ENCODE measurements at regions of chr14 and their contacts with region 1.

Region 1: GRCh38 chr14:94129111-94129757 is at the start of gene IFI27L2:
- DNase-seq: peak; percentile 59
- ATAC-seq: peak; percentile 93
- H3K4me3 ChIP-seq: peak within 1 kb of the TSS; percentile 69 to 82
- H3K27ac ChIP-seq: peak within 1 kb of the TSS; percentile 40
- H3K4me1 ChIP-seq: peaks cover 6 to 22% of the 10 kb centered on the region in 2 experiments; a peak in 3 of 4 replicates
- H3K27me3 ChIP-seq: no peaks in the 10 kb centered on the region
- CTCF ChIP-seq: peak in 2 of 3 experiments; percentile 16 to 23; a peak in 1 of 6 replicates
- POLR2A ChIP-seq: no peak
- RAD21 ChIP-seq: no peak
- total RNA-seq, gene IFI27L2: 42.9 TPM

Region 2: DNA sequence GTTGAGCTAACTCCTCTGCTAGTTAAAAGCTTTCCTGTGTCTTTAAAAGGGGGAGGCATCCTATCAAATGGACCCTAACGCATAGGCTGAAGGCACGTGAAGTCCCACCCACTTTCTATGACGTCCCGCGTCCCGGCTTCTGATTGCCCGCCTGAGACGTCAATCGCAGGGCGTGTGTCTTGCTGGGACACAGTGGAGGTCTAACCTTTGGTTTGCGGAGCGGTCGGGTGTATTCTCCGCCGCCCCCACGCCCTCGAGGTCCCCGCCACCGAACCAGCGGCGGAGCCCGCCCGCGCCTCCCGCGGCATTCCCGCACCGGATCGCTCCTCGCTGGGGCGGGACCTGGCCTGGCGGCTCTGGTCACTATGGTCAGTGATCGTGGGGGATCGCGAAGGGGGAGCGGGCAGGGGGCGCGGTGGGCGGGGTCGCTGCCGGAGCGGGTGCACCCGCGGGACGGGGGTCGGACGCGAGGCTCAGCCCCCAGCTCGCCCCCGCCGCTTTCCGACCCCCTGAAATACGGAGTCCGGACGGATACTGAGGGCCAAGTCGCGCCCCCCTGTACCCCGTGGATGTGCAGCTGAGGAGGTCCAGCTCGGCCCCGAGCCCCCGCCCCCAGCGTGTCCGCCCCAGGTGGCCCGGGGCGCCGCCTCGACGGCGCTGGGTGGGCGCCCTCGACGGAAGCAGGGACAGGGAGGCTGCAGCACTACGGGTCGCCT is 102.9 kb before region 1 on chr14 and contains the start of gene OTUB2:
- CTCF ChIA-PET with region 1: interaction called, 12 read pairs
- POLR2A ChIA-PET with region 1: no interaction called
- RAD21 ChIA-PET with region 1: no interaction called
- intact Hi-C with region 1: no loop called
- DNase-seq: peak; percentile 97
- ATAC-seq: peak; percentile 83
- H3K4me3 ChIP-seq: peak within 1 kb of the TSS; percentile 49 to 66
- H3K27ac ChIP-seq: peak within 1 kb of the TSS; percentile 6; the same call in 1 of the 2 replicates
- H3K4me1 ChIP-seq: peaks cover 29 to 53% of the 10 kb centered on the region in 2 experiments
- H3K27me3 ChIP-seq: no peaks in the 10 kb centered on the region
- CTCF ChIP-seq: no peak
- POLR2A ChIP-seq: no peak
- RAD21 ChIP-seq: no peak
- total RNA-seq, gene OTUB2: 6.6 TPM

Region 3: GRCh38 chr14:94051115-94051514 is 78.1 kb before region 1 on chr14:
- CTCF ChIA-PET with region 1: interaction called, 8 read pairs
- POLR2A ChIA-PET with region 1: no interaction called
- RAD21 ChIA-PET with region 1: interaction called in 1 of 2 experiments, 3 read pairs
- intact Hi-C with region 1: loop called (anchors 1 kb)
- DNase-seq: no peak
- ATAC-seq: no peak
- H3K4me3 ChIP-seq: no peak overlapping the region
- H3K27ac ChIP-seq: no peak overlapping the region
- H3K4me1 ChIP-seq: no peaks in the 10 kb centered on the region
- H3K27me3 ChIP-seq: no peaks in the 10 kb centered on the region
- CTCF ChIP-seq: peak; percentile 34 to 42 (median 37); a peak in 4 of 6 replicates
- POLR2A ChIP-seq: no peak
- RAD21 ChIP-seq: peak; percentile 39; the same call in 1 of the 2 replicates

Region 4: DNA sequence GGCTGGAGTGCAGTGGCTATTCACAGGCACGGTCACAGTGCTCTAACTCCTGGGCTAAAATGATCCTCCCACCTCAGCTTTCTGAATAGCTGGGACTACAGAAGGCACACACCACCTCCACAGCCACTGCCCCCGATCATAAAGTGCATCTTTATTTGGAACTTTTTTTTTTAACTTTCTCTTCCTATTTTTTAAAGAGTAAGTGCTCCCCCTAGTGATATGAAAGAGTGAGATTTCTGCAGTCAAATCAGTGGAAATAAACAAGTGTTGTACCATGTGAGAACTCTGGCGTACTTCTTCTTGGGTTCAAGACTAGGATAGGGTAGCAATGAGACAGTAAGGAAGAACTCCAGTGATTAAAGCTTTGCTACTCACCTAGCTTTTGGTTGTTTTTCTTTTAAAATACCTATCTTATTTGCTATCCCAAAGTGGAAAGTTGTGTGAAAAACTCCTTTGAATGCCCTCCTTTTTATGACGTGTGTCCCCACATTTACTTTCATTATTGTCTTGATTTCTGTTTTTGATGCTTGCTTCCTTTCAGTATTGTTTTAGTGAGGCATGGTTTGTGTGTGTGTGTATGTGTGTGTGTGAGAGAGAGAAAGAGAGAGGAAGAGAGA is 51.5 kb after region 1 on chr14:
- CTCF ChIA-PET with region 1: interaction called, 13 read pairs
- POLR2A ChIA-PET with region 1: no interaction called
- RAD21 ChIA-PET with region 1: no interaction called
- intact Hi-C with region 1: no loop called
- DNase-seq: peak; percentile 35
- ATAC-seq: peak; percentile 89
- H3K4me3 ChIP-seq: 0 out of 4 replicates have a peak overlapping the region, but pooled peaks of 1 of the 2 experiments have one; percentile 8
- H3K27ac ChIP-seq: no peak overlapping the region
- H3K4me1 ChIP-seq: peaks cover 0 to 12% of the 10 kb centered on the region in 2 experiments; a peak in 3 of 4 replicates
- H3K27me3 ChIP-seq: no peaks in the 10 kb centered on the region
- CTCF ChIP-seq: peak; percentile 48 to 71 (median 67)
- POLR2A ChIP-seq: no peak
- RAD21 ChIP-seq: peak; percentile 73

Region 5: DNA sequence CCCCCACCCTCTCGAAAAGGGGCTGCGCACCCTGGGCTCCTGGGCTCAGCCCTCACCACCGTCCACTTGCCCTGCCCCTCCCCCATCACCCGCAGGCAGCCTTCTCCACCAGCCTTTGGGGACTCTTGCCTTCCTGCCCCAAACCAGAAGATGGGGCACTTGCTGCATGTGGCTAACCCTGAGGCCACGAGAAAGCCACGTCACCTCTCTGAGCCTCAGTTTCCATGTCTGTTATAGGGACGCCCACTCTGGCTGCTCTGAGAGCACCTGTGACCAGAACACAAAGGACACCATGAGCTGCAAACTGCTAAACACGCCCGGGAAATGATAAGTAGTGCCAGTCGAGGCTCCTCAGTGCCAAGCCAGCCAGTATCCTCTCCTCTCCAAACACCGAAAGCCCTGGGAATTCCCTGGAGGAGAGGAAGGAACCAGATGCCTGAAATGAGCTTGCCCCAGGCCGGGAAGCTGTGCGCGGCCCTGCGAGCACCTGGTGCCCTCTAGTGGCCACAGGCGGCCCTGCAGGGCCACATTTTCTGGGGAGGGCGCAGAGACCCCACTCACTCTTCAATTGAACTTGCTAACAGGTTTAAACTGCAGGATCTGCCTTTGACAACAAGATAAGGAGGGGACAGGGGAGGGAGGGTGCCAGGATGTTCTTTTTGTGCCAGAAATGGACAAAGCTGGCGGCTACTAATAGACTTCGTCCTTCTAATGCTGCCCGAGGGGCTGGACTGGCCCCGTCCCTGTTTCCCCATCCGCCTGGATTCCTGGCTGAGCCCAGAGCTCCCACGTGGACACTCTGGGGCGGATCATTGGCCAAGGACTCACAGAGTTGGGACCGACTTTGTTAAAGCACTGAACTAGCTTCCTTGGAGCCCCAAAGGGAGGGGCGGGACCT is 357.0 kb after region 1 on chr14:
- CTCF ChIA-PET with region 1: interaction called, 18 read pairs
- POLR2A ChIA-PET with region 1: no interaction called
- RAD21 ChIA-PET with region 1: interaction called in 1 of 2 experiments, 4 read pairs
- intact Hi-C with region 1: loop called (anchors 2 kb)
- DNase-seq: peak; percentile 22
- ATAC-seq: peak; percentile 86
- H3K4me3 ChIP-seq: peak overlapping the region; percentile 3 to 25; a peak in 3 of 4 replicates
- H3K27ac ChIP-seq: no peak overlapping the region
- H3K4me1 ChIP-seq: peaks cover 0 to 13% of the 10 kb centered on the region in 2 experiments; a peak in 2 of 4 replicates
- H3K27me3 ChIP-seq: 0 out of 2 replicates have a peak, but pooled peaks cover 4% of the 10 kb centered on the region
- CTCF ChIP-seq: peak; percentile 90 to 99 (median 99)
- POLR2A ChIP-seq: no peak
- RAD21 ChIP-seq: peak; percentile 85